Left cardiac atrium (tissue), 4 donors: ENCODE measurements at regions of chr3 and their contacts with region 1.

Region 1: DNA sequence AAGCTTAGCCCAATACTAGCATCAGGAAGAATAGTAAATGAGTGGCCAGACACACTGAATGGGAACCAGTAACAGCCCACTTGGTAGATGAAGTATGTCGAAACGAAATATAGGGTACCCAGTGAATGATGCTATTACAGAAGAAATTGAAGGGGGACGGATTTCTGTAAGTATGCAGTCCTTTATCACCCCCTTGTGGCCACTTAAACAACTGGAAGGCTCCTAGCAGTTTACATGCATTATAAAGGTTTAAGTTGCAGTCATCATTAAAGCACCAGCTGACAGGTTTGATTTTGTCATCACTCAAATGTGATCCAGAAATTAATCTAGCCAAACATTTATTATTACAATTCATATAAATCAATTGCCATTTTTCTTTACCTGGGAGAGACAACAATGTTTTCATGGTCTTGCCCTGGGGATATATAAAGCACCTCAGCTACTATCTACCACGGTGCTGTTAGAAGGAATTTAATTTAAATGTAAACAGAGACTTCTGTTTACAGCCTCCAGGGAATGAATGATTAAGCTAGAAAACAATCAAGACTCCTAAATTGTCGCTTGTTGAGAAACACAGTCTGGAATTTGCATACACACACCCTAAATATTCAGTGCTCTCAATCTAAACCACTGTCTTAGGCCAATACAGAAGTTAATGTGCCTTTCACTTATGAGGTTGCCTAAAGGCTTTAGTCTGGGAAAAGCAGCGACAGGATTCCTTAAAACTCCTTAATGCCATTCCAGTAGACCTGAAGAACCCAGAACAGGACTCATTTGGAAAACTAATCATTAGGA is 7.8 kb downstream of the EIF1B start:
- DNase-seq: no peak
- ATAC-seq: peak; percentile 18 to 27

Region 2: DNA sequence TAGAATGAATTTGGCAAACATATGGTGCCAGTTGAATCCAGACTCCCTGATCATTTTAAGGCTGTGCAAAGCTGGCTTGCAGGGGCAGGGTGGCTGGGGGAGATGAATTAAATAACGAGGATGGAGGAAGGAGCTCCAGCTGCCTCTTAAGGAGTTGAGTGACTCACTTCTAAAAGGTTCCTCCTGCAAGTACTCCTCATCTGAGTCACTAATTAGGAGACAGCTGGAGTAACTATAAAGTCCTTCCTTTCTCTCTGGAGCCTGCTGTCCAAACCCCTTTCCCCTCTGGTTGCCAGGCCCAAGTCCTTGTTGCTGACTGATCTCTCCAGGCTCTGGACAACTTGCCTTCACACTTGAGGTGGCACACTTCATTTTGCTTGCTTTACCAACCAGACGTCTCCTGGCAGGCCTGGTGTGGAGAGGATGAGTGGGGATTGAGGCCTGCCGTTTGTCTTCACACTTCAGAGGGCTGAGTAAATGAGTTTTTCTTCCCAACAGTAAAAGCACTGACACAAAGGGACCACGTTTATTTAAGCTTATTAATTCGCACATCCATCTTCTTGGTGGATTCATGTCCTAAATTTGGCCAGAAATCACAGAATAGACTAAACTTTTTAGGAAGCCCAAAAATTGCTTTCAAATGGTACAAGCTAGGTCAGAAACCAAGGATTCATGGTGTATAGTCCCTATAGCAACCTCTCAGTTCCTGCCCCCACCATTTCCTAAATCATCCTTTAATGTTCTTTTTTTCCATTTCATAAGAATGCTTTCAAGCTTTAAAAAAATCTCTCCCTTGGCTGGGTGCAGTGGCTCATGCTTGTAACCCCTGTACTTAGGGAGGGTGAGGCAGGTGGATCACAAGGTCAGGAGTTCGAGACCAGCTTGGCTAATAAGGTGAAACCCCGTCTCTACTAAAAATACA is 598.3 kb before region 1 on chr3:
- intact Hi-C with region 1: loop called in 1 of 2 experiments (anchors 5 kb)
- DNase-seq: no peak
- ATAC-seq: peak in 1 of 2 donors; percentile 68

Region 3: GRCh38 chr3:39970982-39971381 is 346.3 kb before region 1 on chr3:
- intact Hi-C with region 1: no loop called
- DNase-seq: no peak
- ATAC-seq: no peak

Region 4: GRCh38 chr3:40191850-40192448 is 125.3 kb before region 1 on chr3:
- intact Hi-C with region 1: loop called (anchors 1 to 5 kb)
- DNase-seq: peak; percentile 51
- ATAC-seq: peak; percentile 64

Region 5: GRCh38 chr3:40452876-40453730 is 135.8 kb after region 1 on chr3:
- intact Hi-C with region 1: loop called in 1 of 2 experiments (anchors 10 kb)
- DNase-seq: peak; percentile 99
- ATAC-seq: peak; percentile 96 to 97

Region 6: DNA sequence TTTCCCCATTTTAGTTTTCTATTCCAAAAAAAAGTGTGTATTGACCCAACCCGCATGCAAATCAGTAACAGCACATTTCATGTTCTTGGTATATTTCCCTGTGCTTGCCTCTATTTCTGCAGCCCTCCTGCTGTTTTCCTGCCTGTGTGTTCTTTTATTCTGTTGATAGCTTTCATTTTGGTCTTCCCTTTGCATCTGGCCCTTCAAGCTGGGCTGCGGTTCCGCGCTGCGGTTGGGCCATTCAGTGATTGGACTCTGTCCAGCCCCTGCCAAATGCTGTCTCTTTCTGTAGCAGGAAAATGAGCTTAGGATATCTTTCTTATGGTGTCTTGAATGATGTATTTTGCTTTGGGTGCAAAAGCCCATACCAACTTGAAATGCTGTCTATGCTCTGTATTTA is 257.4 kb after region 1 on chr3:
- intact Hi-C with region 1: loop called in 1 of 2 experiments (anchors 10 kb)
- DNase-seq: no peak
- ATAC-seq: no peak